Activated CD8-positive, alpha-beta T cell treated with anti-CD3 and anti-CD28 coated beads for 36 hours (primary cell): ENCODE measurements at regions of chr17 and their contacts with region 1.

Region 1: GRCh38 chr17:20121359-20122253 is 112.4 kb downstream of the SPECC1 start:
- DNase-seq: peak; percentile 82
- ATAC-seq: peak; percentile 75
- H3K4me3 Mint-ChIP-seq: no peak overlapping the region
- H3K27ac Mint-ChIP-seq: no peak overlapping the region
- H3K4me1 Mint-ChIP-seq: peaks cover 2% of the 10 kb centered on the region
- H3K27me3 Mint-ChIP-seq: peaks cover 1% of the 10 kb centered on the region
- CTCF ChIP-seq: peak; percentile 97

Region 2: GRCh38 chr17:19992803-19993713 is 128.5 kb before region 1 on chr17:
- CTCF ChIA-PET with region 1: interaction called, 48 read pairs
- POLR2A ChIA-PET with region 1: no interaction called
- intact Hi-C with region 1: loop called (anchors 5 kb)
- DNase-seq: peak; percentile 88
- ATAC-seq: peak; percentile 99
- H3K4me3 Mint-ChIP-seq: no peak overlapping the region
- H3K27ac Mint-ChIP-seq: no peak overlapping the region
- H3K4me1 Mint-ChIP-seq: no peaks in the 10 kb centered on the region
- H3K27me3 Mint-ChIP-seq: peaks cover 3% of the 10 kb centered on the region
- CTCF ChIP-seq: peak; percentile 63

Region 3: DNA sequence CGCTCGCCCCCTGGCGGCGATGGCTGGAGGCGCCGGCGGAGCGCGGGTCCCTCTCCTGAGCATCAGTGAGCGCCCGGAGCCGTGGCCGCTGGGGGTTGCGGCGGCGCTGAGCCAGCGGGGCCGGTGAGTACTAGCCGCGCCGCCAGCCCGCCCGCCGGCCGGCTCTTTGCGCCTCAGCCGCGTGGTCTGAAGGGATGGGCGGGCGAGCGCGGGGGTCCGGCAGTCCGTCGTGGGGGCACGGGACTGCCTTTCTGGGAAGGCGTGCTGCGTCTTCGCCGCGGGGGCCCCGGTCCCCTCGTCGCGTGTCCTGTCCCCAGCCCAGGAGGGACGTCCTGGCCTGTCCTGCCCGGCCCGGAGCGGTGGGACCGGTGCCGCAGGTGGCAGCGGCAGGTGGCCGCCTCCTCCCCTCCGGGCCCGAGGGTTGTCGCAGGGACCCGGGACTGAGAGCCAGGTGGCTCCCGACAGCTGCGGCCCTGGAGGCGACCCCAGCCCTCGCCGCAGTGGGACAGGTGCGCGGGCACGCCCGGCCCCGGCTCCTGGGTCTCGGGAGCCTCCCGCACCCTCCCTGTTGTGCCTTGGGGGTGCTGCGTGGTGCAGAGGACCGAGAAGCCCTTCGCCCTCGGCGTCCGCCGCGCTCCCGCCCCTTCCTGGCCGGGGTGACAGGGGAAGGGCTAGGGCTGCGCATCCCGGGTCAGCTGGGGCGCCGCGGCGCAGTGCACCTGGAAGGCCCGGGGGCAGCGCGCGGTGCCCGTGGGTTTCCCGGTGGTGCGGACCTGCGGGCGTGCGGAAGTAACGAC is 112.1 kb before region 1 on chr17 and contains the start of gene SPECC1:
- CTCF ChIA-PET with region 1: interaction called, 10 read pairs
- POLR2A ChIA-PET with region 1: no interaction called
- intact Hi-C with region 1: no loop called
- DNase-seq: peak; percentile 86
- ATAC-seq: peak; percentile 97
- H3K4me3 Mint-ChIP-seq: peak within 1 kb of the TSS; percentile 82
- H3K27ac Mint-ChIP-seq: no peak within 1 kb of the TSS
- H3K4me1 Mint-ChIP-seq: peaks cover 7% of the 10 kb centered on the region
- H3K27me3 Mint-ChIP-seq: peaks cover 51% of the 10 kb centered on the region
- CTCF ChIP-seq: peak; percentile 97
- total RNA-seq, gene SPECC1: 9.9 to 10.3 TPM

Region 4: GRCh38 chr17:20053361-20053964 is 68.1 kb before region 1 on chr17:
- CTCF ChIA-PET with region 1: no interaction called
- POLR2A ChIA-PET with region 1: no interaction called
- intact Hi-C with region 1: no loop called
- DNase-seq: no peak
- ATAC-seq: no peak
- H3K4me3 Mint-ChIP-seq: no peak overlapping the region
- H3K27ac Mint-ChIP-seq: no peak overlapping the region
- H3K4me1 Mint-ChIP-seq: no peaks in the 10 kb centered on the region
- H3K27me3 Mint-ChIP-seq: peaks cover 2% of the 10 kb centered on the region
- CTCF ChIP-seq: no peak

Region 5: DNA sequence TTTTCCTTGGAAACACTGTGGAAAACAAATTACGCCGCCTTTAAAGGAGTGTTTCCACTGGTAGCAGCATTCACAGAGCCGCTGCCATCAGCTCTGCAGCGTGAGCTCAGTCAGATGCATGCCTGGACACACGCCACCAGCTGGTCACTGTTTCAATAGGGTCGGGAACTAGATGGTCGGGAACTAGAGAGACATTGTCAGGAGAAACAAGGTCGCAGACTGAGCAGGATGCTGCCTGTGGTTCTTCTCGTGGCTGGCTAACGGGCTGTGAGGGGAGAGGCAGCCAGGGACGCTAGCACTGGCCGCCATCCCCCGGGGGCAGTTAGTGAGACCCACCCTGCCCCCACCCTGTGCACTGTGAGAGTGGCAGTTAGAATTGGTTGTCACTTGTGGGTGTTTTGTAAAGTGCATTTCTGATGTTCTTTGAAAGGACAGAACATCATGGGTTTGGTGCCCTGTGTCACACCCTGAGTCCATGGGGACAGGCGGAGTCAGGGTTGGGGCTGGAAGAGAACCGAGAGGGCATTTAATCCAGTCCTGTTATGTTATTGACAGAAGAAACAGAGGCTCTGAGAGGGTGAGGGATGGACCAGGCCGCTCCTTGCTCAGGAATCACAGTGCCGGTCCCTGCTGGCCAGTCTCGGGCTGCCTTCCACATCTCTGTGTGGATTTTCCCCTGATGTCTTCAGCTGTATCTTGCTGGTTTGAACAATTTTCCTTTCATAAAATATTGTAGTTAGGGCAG is 26.1 kb before region 1 on chr17:
- CTCF ChIA-PET with region 1: no interaction called
- POLR2A ChIA-PET with region 1: no interaction called
- intact Hi-C with region 1: no loop called
- DNase-seq: no peak
- ATAC-seq: no peak
- H3K4me3 Mint-ChIP-seq: no peak overlapping the region
- H3K27ac Mint-ChIP-seq: no peak overlapping the region
- H3K4me1 Mint-ChIP-seq: no peaks in the 10 kb centered on the region
- H3K27me3 Mint-ChIP-seq: peaks cover 1% of the 10 kb centered on the region
- CTCF ChIP-seq: no peak

Region 6: GRCh38 chr17:20226814-20227482 is 105.3 kb after region 1 on chr17:
- CTCF ChIA-PET with region 1: interaction called, 39 read pairs
- POLR2A ChIA-PET with region 1: no interaction called
- intact Hi-C with region 1: loop called (anchors 2 kb)
- DNase-seq: peak; percentile 87
- ATAC-seq: peak; percentile 100
- H3K4me3 Mint-ChIP-seq: no peak overlapping the region
- H3K27ac Mint-ChIP-seq: no peak overlapping the region
- H3K4me1 Mint-ChIP-seq: peaks cover 8% of the 10 kb centered on the region
- H3K27me3 Mint-ChIP-seq: no peaks in the 10 kb centered on the region
- CTCF ChIP-seq: peak; percentile 90

Region 7: GRCh38 chr17:20234276-20234675 is 112.7 kb after region 1 on chr17:
- CTCF ChIA-PET with region 1: interaction called, 39 read pairs
- POLR2A ChIA-PET with region 1: no interaction called
- intact Hi-C with region 1: no loop called
- DNase-seq: peak; percentile 86
- ATAC-seq: peak; percentile 99
- H3K4me3 Mint-ChIP-seq: no peak overlapping the region
- H3K27ac Mint-ChIP-seq: peak overlapping the region; percentile 88
- H3K4me1 Mint-ChIP-seq: peaks cover 23% of the 10 kb centered on the region
- H3K27me3 Mint-ChIP-seq: no peaks in the 10 kb centered on the region
- CTCF ChIP-seq: no peak

Region 8: GRCh38 chr17:20315821-20316220 is 194.2 kb after region 1 on chr17:
- CTCF ChIA-PET with region 1: interaction called, 11 read pairs
- POLR2A ChIA-PET with region 1: no interaction called
- intact Hi-C with region 1: loop called (anchors 10 kb)
- DNase-seq: no peak
- ATAC-seq: no peak
- H3K4me3 Mint-ChIP-seq: no peak overlapping the region
- H3K27ac Mint-ChIP-seq: no peak overlapping the region
- H3K4me1 Mint-ChIP-seq: no peaks in the 10 kb centered on the region
- H3K27me3 Mint-ChIP-seq: no peaks in the 10 kb centered on the region
- CTCF ChIP-seq: no peak